ENCODE measurements at regions of chr5 and their contacts with region 1.

Region 1: GRCh38 chr5:76736679-76737556 is 21.0 kb downstream of the F2R start:
- DNase-seq: no peak
- H3K4me3 Mint-ChIP-seq: no peak overlapping the region
- H3K27ac Mint-ChIP-seq: peak overlapping the region; percentile 57
- H3K4me1 Mint-ChIP-seq: peaks cover 63% of the 10 kb centered on the region
- H3K27me3 Mint-ChIP-seq: no peaks in the 10 kb centered on the region

Region 2: GRCh38 chr5:76527685-76528161 is 209.2 kb before region 1 on chr5:
- intact Hi-C with region 1: no loop called
- DNase-seq: no peak
- H3K4me3 Mint-ChIP-seq: no peak overlapping the region
- H3K27ac Mint-ChIP-seq: no peak overlapping the region
- H3K4me1 Mint-ChIP-seq: peaks cover 66% of the 10 kb centered on the region
- H3K27me3 Mint-ChIP-seq: no peaks in the 10 kb centered on the region

Region 3: GRCh38 chr5:76691467-76692138 is 45.3 kb before region 1 on chr5:
- intact Hi-C with region 1: loop called (anchors 1 kb)
- DNase-seq: no peak
- H3K4me3 Mint-ChIP-seq: no peak overlapping the region
- H3K27ac Mint-ChIP-seq: peak overlapping the region; percentile 78
- H3K4me1 Mint-ChIP-seq: peaks cover 45% of the 10 kb centered on the region
- H3K27me3 Mint-ChIP-seq: no peaks in the 10 kb centered on the region